Gastrocnemius medialis (tissue), 4 donors: ENCODE measurements at regions of chr1 and their contacts with region 1.

Region 1: DNA sequence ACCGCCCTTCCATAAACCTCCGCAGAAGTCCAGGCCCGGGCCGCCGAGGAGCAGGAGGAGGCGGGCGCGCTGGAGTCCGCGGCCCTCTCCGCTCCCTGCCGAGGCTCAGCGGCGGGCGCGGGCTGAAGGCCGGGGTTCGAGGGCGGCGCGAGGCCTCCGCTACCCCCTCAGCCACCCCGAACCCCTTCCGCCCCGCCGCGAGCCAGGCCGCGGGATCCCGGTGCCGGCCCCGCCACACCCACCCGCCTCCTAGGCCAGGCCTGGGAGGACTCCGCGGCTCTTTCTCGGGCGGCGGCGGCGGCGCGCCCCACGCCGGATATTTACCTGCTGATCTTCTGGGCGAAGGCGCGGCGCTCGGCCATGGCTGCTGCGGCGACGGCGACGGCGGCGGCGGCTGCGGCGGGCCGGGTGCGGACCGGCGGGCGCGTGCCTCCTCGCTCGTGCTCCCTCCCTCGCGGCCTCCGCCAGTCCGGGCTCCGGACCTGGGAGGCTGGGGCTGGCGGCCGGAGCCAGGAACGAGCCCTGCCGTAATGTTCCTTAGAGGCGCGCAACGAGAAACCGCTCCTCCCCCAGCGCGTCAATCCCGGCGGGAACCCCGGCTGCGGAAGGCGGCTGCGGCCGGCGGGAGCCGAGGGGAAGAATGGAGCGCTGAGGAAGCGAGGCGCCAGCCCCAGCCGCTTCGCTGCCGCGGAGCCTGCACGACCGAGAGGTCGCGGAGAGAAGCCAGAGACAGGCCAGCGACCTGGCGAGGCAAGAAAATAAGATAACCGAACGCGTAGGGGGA is at the start of gene DOCK7:
- DNase-seq: peak; percentile 61 to 65
- ATAC-seq: peak; percentile 91 to 93
- H3K4me3 ChIP-seq: peak within 1 kb of the TSS; percentile 66 to 87 (median 80)
- H3K27ac ChIP-seq: peak within 1 kb of the TSS; percentile 64 to 81 (median 76)
- H3K4me1 ChIP-seq: peaks cover 2 to 15% of the 10 kb centered on the region in 2 donors
- H3K27me3 ChIP-seq: no peaks in the 10 kb centered on the region
- CTCF ChIP-seq: no peak
- POLR2A ChIP-seq: peak; percentile 37 to 44
- total RNA-seq, gene DOCK7: 7.9 to 14.7 (median 10.9) TPM

Region 2: GRCh38 chr1:62436466-62437256 is 251.4 kb before region 1 on chr1 and contains the start of gene USP1:
- in situ Hi-C with region 1: no loop called
- intact Hi-C with region 1: loop called (anchors 5 kb)
- DNase-seq: peak; percentile 96 to 98
- ATAC-seq: peak; percentile 91 to 92
- H3K4me3 ChIP-seq: peak within 1 kb of the TSS; percentile 87 to 94 (median 92)
- H3K27ac ChIP-seq: peak within 1 kb of the TSS; percentile 94 to 99 (median 99)
- H3K4me1 ChIP-seq: peaks cover 22 to 32% of the 10 kb centered on the region in 2 donors
- H3K27me3 ChIP-seq: no peaks in the 10 kb centered on the region
- CTCF ChIP-seq: no peak
- POLR2A ChIP-seq: peak; percentile 54 to 77
- total RNA-seq, gene USP1: 11.8 to 23.4 (median 17.3) TPM

Region 3: DNA sequence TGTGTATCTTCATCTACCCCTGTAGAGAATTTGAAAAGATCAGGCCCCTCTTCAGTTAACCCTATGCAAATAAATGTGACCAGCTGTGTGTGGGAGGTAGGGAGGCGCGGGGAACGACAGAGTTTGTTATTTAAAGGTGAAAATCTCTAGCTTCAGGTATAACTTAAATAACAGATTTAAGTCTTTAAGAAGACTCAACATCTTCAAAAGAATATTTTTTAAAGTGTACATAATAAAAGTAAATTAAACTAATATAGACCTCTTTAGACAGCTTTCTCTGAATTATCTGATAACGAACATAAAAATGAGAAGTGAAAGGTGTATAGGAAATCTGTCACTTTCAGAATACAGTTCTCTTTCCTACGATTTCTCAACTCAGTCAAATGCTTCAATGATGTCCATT is 74.8 kb before region 1 on chr1:
- in situ Hi-C with region 1: no loop called
- intact Hi-C with region 1: no loop called
- DNase-seq: no peak
- ATAC-seq: no peak
- H3K4me3 ChIP-seq: no peak overlapping the region
- H3K27ac ChIP-seq: no peak overlapping the region
- H3K4me1 ChIP-seq: no peaks in the 10 kb centered on the region
- H3K27me3 ChIP-seq: no peaks in the 10 kb centered on the region
- CTCF ChIP-seq: no peak
- POLR2A ChIP-seq: no peak